Dorsolateral prefrontal cortex (tissue), 120 donors: ENCODE measurements at regions of chr7 and their contacts with region 1.

Region 1: GRCh38 chr7:64999165-65000004 is 7.1 kb downstream of the ERV3-1 start:
- DNase-seq: no peak
- H3K4me3 ChIP-seq: no peak overlapping the region
- H3K27ac ChIP-seq: peak overlapping the region in 2 of 59 donors; percentile 28 to 53
- H3K27me3 ChIP-seq: no peaks in the 10 kb centered on the region
- CTCF ChIP-seq: no peak

Region 2: GRCh38 chr7:65037740-65038678 is 38.6 kb after region 1 on chr7:
- intact Hi-C with region 1: loop called in 1 of 2 experiments (anchors 5 kb)
- DNase-seq: peak; percentile 75 to 94 (median 88)
- H3K4me3 ChIP-seq: peak overlapping the region; percentile 33 to 85 (median 71)
- H3K27ac ChIP-seq: peak overlapping the region in 50 of 59 donors; percentile 18 to 94 (median 75)
- H3K27me3 ChIP-seq: no peaks in the 10 kb centered on the region
- CTCF ChIP-seq: peak in 2 of 56 donors; percentile 7 to 11